Activated T-helper 1 cell treated with anti-CD3 and anti-CD28 coated beads, Interleukin-12 subunit alpha, Interleukin-12 subunit beta, Interleukin-2, Interleukin-4 antibody, amounts not matched to agents 30 ng/mL and 10 ng/mL and 1 ng/mL, durations not matched to agents 14 hours and 24 hours and 36 hours (primary cell): ENCODE measurements at regions of chr22 and their contacts with region 1.

Region 1: GRCh38 chr22:36123673-36124630 is 36.6 kb downstream of the APOL3 start:
- DNase-seq: peak; percentile 89
- H3K4me3 Mint-ChIP-seq: peak overlapping the region; percentile 54
- H3K27ac Mint-ChIP-seq: peak overlapping the region; percentile 83
- H3K4me1 Mint-ChIP-seq: peaks cover 10% of the 10 kb centered on the region
- H3K27me3 Mint-ChIP-seq: peaks cover 4% of the 10 kb centered on the region

Region 2: DNA sequence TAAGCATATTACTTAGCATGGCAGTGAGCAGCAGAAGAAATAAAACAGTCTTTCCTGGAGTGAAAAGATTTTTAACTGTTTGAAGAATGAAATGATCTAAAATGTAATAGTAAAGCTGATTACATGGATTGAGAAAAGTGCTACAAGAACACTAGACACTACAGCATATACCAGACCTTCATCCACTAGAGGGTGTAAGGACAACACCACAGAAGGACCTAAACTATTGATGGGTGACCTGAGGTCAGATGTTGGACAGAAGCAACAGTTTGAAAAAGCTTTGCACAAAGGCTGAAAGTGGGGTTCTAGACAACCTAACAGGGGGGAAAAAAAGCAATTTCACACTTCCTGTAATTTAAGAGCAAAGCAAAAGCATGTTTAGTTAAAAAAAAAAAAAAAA is 193.0 kb before region 1 on chr22:
- intact Hi-C with region 1: loop called (anchors 1 kb)
- DNase-seq: no peak
- H3K4me3 Mint-ChIP-seq: no peak overlapping the region
- H3K27ac Mint-ChIP-seq: no peak overlapping the region
- H3K4me1 Mint-ChIP-seq: no peaks in the 10 kb centered on the region
- H3K27me3 Mint-ChIP-seq: peaks cover 8% of the 10 kb centered on the region

Region 3: DNA sequence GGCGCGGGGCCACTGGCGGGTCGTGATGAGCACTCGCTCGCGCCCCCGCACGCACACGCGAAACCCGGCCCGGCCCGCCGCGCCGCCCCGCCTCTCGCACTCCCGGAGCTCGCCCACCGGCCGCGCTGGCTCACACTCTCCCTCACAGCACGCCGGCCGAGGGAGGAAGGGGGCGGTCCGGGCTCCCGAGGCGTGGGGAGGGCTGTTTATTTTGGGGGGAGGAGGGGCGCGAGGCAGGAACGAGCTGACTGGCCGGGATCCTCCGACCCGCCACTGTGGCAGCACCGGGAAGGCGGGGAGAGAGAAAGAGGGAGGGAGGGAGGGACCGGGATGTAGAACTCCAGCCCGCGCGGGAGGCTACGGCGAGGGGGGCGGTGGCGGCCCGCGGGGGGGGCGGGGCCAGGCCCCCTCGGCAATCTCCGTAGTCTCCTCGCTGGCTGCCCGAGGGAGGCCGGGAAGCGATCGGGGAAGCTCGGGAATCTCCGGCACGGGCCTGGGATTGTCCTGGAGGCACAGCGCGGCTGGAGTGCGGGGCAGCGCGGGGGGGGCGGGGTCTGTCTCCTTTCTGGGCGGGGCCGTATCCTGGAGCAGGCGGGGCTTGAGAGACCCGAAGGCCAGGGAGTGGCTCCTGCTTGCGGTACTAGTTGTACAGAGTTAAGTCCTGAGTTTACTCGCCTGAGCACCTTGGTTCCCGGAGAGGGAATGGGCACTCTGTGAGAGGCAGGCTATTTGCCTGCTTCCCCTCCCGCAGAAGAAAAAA is 95.1 kb before region 1 on chr22 and contains the start of gene RBFOX2:
- intact Hi-C with region 1: loop called (anchors 1 kb)
- DNase-seq: peak; percentile 54
- H3K4me3 Mint-ChIP-seq: peak within 1 kb of the TSS; percentile 87
- H3K27ac Mint-ChIP-seq: peak within 1 kb of the TSS; percentile 67
- H3K4me1 Mint-ChIP-seq: peaks cover 21% of the 10 kb centered on the region
- H3K27me3 Mint-ChIP-seq: peaks cover 47% of the 10 kb centered on the region
- total RNA-seq, gene RBFOX2: 3.7 and 3.8 TPM in 2 replicates

Region 4: DNA sequence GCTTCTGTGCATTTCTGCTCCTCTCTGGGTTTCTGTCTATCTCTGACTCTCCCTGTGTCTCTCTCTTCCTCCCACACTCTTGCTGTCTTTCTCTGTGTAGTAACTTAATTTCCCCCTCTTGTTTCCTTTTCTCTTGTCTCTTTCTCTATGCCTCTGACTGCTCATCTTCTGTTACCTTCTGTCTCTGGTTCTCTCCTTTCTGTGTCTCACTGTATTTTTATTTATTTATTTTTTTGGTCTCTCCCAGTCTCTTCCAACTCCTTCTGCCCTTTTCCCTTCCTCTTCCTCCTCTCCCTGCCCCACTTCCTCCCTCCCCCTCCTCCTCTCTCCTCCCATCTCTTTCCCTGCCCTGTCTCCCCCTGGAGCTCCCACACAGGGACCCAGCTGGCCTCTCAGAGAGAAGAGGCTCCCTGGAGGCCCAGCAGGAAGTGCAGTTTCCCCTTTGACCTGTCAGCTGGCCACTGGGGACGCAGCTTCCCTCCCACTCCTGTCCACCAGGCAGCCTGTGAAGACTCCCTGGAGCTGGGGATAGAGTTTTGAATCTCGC is 302.1 kb after region 1 on chr22:
- intact Hi-C with region 1: no loop called
- DNase-seq: no peak
- H3K4me3 Mint-ChIP-seq: no peak overlapping the region
- H3K27ac Mint-ChIP-seq: peak overlapping the region; percentile 72
- H3K4me1 Mint-ChIP-seq: peaks cover 18% of the 10 kb centered on the region
- H3K27me3 Mint-ChIP-seq: no peaks in the 10 kb centered on the region